ENCODE measurements at regions of chr7 and their contacts with region 1.

Region 1: DNA sequence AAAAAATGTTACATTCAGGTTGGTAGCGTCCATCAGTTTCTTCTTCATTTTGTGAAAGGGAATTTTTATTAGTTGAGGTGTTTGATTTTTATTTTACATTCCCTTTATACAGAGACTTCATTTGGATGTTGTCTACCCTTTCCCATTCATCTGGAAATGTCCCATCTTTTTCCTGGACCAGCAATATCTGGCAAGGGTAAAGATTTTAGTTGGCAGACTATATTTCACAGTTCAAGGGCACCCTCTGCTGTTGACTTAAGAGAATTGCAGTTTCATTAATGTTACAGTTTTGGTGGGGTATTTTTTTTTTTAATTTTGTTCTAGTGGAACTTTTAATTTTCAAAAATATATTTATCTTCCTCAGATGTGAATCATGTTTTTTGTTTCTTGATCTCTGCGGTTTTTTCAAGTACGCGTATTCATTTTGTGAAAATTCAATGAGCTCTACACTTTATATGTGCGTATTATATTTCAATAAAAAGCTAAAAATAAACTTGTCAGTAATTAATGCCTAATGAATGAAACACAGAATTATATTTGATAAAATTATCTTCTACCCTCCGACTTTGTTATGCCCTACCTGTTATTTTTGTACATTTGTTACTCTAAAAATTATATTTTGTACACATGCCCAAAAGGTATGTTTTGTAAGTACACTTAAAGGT is 97.9 kb upstream of the KLF14 start:
- DNase-seq: peak in 4 of 5 donors; percentile 16 to 24 (median 18)
- H3K4me3 ChIP-seq: no peak overlapping the region
- H3K4me3 Mint-ChIP-seq: no peak overlapping the region
- H3K27ac ChIP-seq: no peak overlapping the region
- H3K27ac Mint-ChIP-seq: no peak overlapping the region
- H3K4me1 ChIP-seq: no peaks in the 10 kb centered on the region
- H3K4me1 Mint-ChIP-seq: no peaks in the 10 kb centered on the region
- H3K27me3 ChIP-seq: no peaks in the 10 kb centered on the region
- H3K27me3 Mint-ChIP-seq: peaks cover 5 to 12% of the 10 kb centered on the region in 2 donors

Region 2: GRCh38 chr7:130063036-130063435 is 768.9 kb before region 1 on chr7:
- CTCF ChIA-PET with region 1: interaction called, 5 read pairs
- POLR2A ChIA-PET with region 1: no interaction called
- intact Hi-C with region 1: loop called (anchors 1 kb)
- DNase-seq: peak; percentile 46 to 58 (median 53)
- H3K4me3 ChIP-seq: no peak overlapping the region
- H3K4me3 Mint-ChIP-seq: no peak overlapping the region
- H3K27ac ChIP-seq: no peak overlapping the region
- H3K27ac Mint-ChIP-seq: no peak overlapping the region
- H3K4me1 ChIP-seq: no peaks in the 10 kb centered on the region
- H3K4me1 Mint-ChIP-seq: no peaks in the 10 kb centered on the region
- H3K27me3 ChIP-seq: no peaks in the 10 kb centered on the region
- H3K27me3 Mint-ChIP-seq: peaks cover 5 to 9% of the 10 kb centered on the region in 2 donors

Region 3: DNA sequence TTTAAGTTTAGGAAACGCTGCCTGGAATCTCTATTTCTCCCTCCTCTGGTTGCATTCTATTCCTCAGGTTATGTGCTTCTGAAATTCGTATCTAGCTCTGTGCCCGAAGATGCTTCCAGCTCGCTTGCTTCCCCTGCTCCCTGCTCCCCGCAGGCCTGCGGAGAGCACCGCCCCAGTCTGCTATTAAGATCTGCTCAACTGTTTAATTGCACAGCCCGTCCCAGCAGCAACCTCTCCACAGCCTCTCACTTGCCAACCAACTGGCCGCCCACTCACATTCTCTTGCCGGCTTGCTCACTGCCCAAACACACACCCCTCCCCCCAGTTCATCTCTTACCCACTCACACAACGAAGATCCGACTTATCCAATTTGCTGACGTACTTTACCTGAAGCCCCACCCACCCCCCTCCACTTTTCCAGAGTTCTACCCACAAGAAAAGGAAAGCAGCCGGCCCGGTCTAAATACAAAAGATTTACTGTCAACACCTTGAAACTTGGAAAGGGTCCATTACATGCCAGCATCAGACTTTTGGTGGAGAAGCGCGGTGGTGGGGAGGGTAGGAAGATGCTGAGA is 69.3 kb after region 1 on chr7:
- CTCF ChIA-PET with region 1: no interaction called
- POLR2A ChIA-PET with region 1: no interaction called
- intact Hi-C with region 1: no loop called
- DNase-seq: peak in 1 of 5 donors; percentile 32
- H3K4me3 ChIP-seq: no peak overlapping the region
- H3K4me3 Mint-ChIP-seq: peak overlapping the region in 6 of 8 donors; percentile 33 to 55 (median 48)
- H3K27ac ChIP-seq: peak overlapping the region; percentile 21
- H3K27ac Mint-ChIP-seq: peak overlapping the region; percentile 76 to 96 (median 93)
- H3K4me1 ChIP-seq: peaks cover 99% of the 10 kb centered on the region
- H3K4me1 Mint-ChIP-seq: peaks cover 65 to 100% (median 81%) of the 10 kb centered on the region in 4 donors
- H3K27me3 ChIP-seq: no peaks in the 10 kb centered on the region
- H3K27me3 Mint-ChIP-seq: no peaks in the 10 kb centered on the region

Region 4: GRCh38 chr7:131346885-131347592 is 515.1 kb after region 1 on chr7:
- CTCF ChIA-PET with region 1: no interaction called
- POLR2A ChIA-PET with region 1: no interaction called
- intact Hi-C with region 1: no loop called
- DNase-seq: no peak
- H3K4me3 ChIP-seq: no peak overlapping the region
- H3K4me3 Mint-ChIP-seq: peak overlapping the region in 3 of 8 donors; percentile 0 to 50 (median 30)
- H3K27ac ChIP-seq: no peak overlapping the region
- H3K27ac Mint-ChIP-seq: peak overlapping the region in 3 of 7 donors; percentile 11 to 54 (median 43)
- H3K4me1 ChIP-seq: peaks cover 29% of the 10 kb centered on the region
- H3K4me1 Mint-ChIP-seq: peaks cover 30 to 58% (median 43%) of the 10 kb centered on the region in 4 donors
- H3K27me3 ChIP-seq: no peaks in the 10 kb centered on the region
- H3K27me3 Mint-ChIP-seq: no peaks in the 10 kb centered on the region